Posterior cingulate gyrus (tissue), 11 donors: ENCODE measurements at regions of chr6 and their contacts with region 1.

Region 1: GRCh38 chr6:110682460-110682853 is 132.8 kb downstream of the CDK19 start:
- DNase-seq: peak in 3 of 10 donors; percentile 21 to 62 (median 33)

Region 2: GRCh38 chr6:110067837-110068591 is 614.4 kb before region 1 on chr6:
- intact Hi-C with region 1: no loop called
- DNase-seq: peak in 1 of 10 donors; percentile 25

Region 3: DNA sequence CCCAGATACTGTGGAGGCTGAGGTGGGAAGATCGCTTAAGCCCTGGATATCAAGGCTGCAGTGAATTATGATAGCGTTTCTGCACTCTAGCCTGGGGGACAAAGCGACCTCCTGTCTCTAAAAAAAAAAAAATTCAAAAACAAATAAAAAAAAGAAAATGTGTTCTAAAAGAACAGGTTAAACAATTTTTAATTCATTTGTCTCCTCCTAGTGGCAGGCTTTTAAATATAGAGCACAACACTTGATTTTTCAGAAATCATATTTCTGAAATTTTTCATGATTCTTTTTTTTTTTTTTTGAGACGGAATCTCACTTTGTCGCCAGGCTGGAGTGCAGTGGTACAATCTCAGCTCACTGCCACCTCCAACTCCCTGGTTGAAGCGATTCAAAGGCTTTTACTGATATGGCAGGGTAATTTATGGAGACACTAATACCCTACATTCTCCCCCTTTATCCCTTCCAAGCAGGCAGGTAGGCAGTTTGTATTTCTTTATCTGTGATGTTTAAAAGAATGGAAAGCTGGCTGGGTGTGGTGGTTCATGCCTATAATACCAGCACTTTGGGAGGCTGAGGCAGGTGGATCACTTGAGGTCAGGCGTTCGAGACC is 267.3 kb after region 1 on chr6:
- intact Hi-C with region 1: loop called (anchors 1 kb)
- DNase-seq: no peak